ENCODE measurements at regions of chr12 and their contacts with region 1.

Region 1: DNA sequence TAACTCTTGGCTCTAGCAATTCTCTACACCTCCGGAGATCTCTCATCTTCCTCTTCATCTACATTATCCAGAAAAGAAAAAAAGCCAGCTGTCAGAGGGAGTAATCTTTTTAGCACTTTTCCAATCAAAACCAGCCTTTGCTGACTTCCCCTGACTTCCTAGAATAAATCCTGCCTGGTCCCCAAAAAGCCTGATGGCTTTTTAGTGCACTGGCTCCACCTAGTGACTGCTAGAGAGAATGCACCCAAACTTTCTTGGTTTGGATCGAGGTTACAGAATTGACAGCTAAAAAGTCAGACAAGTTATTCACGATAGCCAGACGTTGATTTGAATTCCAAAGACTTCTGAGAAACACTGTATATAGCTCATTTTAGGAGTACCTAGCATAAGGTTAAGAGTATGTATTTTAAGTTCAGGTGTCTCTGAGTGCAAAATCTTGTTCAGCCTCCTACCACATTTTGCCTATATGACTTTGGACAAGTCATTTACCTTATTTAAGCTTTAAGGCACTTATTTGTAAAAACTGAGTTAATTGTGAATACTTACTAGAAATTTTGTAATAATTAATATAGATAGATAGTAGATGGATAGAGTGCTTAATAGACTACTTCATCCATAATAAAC is 185.7 kb upstream of the GRIN2B start:
- DNase-seq: no peak
- ATAC-seq: peak; percentile 66
- H3K4me3 Mint-ChIP-seq: no peak overlapping the region
- H3K27ac Mint-ChIP-seq: no peak overlapping the region
- H3K4me1 Mint-ChIP-seq: peaks cover 30% of the 10 kb centered on the region
- H3K27me3 Mint-ChIP-seq: no peaks in the 10 kb centered on the region
- CTCF ChIP-seq: peak; percentile 75

Region 2: GRCh38 chr12:13255792-13256691 is 911.1 kb before region 1 on chr12:
- CTCF ChIA-PET with region 1: interaction called, 6 read pairs
- POLR2A ChIA-PET with region 1: no interaction called
- intact Hi-C with region 1: loop called (anchors 5 kb)
- DNase-seq: peak; percentile 61
- ATAC-seq: peak; percentile 97
- H3K4me3 Mint-ChIP-seq: no peak overlapping the region
- H3K27ac Mint-ChIP-seq: no peak overlapping the region
- H3K4me1 Mint-ChIP-seq: peaks cover 2% of the 10 kb centered on the region
- H3K27me3 Mint-ChIP-seq: peaks cover 3% of the 10 kb centered on the region
- CTCF ChIP-seq: peak; percentile 50

Region 3: DNA sequence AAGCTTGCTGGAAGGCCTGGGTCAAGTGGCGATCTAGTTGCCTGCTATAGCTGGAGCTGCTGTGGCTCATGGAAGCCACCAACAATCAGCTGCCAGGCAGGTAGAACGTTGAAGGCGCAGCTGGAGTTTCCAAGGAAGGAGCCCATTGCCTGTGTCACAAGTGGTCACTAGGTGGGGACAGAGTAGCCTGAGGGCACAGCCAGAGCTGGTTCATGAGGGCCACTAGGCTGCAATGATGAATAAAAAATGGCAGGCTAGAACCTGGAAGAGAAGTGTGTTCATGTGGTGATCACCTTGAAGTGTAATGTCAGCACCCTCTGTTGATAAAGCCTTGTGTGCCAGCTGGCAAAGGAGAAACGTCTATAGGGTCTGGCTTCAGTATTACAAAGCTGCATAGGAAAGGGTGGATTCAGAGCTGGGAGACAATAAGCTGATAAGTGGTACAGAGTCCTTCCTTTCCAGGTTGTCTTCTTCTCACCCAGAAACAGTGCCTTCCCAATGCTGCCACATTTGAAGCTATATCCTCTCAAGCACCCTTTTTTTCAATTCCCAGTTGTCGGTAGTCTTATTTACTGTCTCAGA is 804.8 kb before region 1 on chr12:
- CTCF ChIA-PET with region 1: interaction called, 28 read pairs
- POLR2A ChIA-PET with region 1: no interaction called
- intact Hi-C with region 1: loop called (anchors 1 kb)
- DNase-seq: peak; percentile 33
- ATAC-seq: peak; percentile 84
- H3K4me3 Mint-ChIP-seq: no peak overlapping the region
- H3K27ac Mint-ChIP-seq: no peak overlapping the region
- H3K4me1 Mint-ChIP-seq: no peaks in the 10 kb centered on the region
- H3K27me3 Mint-ChIP-seq: peaks cover 11% of the 10 kb centered on the region
- CTCF ChIP-seq: peak; percentile 63

Region 4: GRCh38 chr12:13744561-13744960 is 422.6 kb before region 1 on chr12:
- CTCF ChIA-PET with region 1: no interaction called
- POLR2A ChIA-PET with region 1: no interaction called
- intact Hi-C with region 1: loop called (anchors 1 kb)
- DNase-seq: no peak
- ATAC-seq: no peak
- H3K4me3 Mint-ChIP-seq: no peak overlapping the region
- H3K27ac Mint-ChIP-seq: no peak overlapping the region
- H3K4me1 Mint-ChIP-seq: peaks cover 3% of the 10 kb centered on the region
- H3K27me3 Mint-ChIP-seq: peaks cover 27% of the 10 kb centered on the region
- CTCF ChIP-seq: no peak

Region 5: DNA sequence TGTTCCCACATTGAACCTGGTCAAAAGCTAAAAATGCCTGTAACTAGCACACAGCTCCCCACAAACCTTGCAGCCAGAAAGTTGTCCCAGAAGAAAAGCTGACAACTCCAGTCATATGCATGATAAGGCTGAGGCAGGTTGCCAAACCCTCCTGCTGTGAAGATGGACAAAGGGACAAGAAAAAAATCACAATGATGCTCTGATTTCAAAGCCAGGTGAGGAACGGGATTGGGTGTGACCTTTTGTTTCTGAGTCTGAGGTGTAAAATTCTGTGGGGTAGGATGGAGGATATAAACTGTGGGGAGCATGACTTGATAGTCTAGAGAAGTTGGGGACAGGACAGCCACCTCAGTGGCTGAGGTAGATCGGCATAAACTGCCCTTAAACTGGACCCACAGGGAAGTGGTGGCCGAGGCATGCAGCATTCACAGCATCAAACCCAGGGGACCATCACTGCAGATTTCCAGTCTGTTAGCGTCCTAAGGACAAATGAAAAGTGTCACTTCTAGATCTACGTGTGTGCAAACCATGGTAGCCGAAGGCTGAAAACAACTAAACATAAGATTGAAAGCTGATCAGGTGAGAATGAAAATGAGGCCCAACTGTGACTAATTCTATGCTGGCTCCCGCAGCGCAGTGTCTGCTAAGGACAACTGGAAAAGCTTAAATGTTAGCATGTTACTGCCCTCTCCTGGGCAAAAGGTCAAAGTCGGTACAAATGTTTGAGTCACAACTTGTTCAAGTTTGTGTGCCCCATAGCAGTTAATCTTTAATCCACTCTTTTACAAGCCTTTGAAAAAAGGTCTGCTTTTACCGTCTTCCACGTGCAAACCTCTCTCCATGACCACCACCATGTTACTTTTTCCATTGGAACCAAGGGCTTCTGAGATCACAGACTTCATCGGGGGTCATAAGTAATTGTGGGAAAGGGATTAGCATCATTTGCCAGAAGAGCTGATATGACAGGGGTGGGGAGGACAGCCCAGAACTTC is 225.6 kb before region 1 on chr12:
- CTCF ChIA-PET with region 1: interaction called, 3 read pairs
- POLR2A ChIA-PET with region 1: no interaction called
- intact Hi-C with region 1: loop called (anchors 1 kb)
- DNase-seq: no peak
- ATAC-seq: peak; percentile 31
- H3K4me3 Mint-ChIP-seq: no peak overlapping the region
- H3K27ac Mint-ChIP-seq: no peak overlapping the region
- H3K4me1 Mint-ChIP-seq: peaks cover 7% of the 10 kb centered on the region
- H3K27me3 Mint-ChIP-seq: peaks cover 20% of the 10 kb centered on the region
- CTCF ChIP-seq: no peak

Region 6: GRCh38 chr12:14111230-14111865 is 55.8 kb before region 1 on chr12:
- CTCF ChIA-PET with region 1: interaction called, 101 read pairs
- POLR2A ChIA-PET with region 1: no interaction called
- intact Hi-C with region 1: loop called (anchors 1 kb)
- DNase-seq: peak; percentile 21
- ATAC-seq: peak; percentile 96
- H3K4me3 Mint-ChIP-seq: no peak overlapping the region
- H3K27ac Mint-ChIP-seq: peak overlapping the region; percentile 18
- H3K4me1 Mint-ChIP-seq: peaks cover 13% of the 10 kb centered on the region
- H3K27me3 Mint-ChIP-seq: no peaks in the 10 kb centered on the region
- CTCF ChIP-seq: no peak

Region 7: GRCh38 chr12:14716848-14717444 is 549.8 kb after region 1 on chr12:
- CTCF ChIA-PET with region 1: no interaction called
- POLR2A ChIA-PET with region 1: no interaction called
- intact Hi-C with region 1: no loop called
- DNase-seq: no peak
- ATAC-seq: peak; percentile 75
- H3K4me3 Mint-ChIP-seq: no peak overlapping the region
- H3K27ac Mint-ChIP-seq: no peak overlapping the region
- H3K4me1 Mint-ChIP-seq: peaks cover 2% of the 10 kb centered on the region
- H3K27me3 Mint-ChIP-seq: peaks cover 8% of the 10 kb centered on the region
- CTCF ChIP-seq: peak; percentile 15